Activated CD4-positive, alpha-beta memory T cell treated with anti-CD3 and anti-CD28 coated beads for 36 hours (primary cell): ENCODE measurements at regions of chr3 and their contacts with region 1.

Region 1: GRCh38 chr3:4978204-4978965 is 852 bp upstream of the BHLHE40 start:
- DNase-seq: peak; percentile 98
- H3K4me3 Mint-ChIP-seq: peak overlapping the region; percentile 87
- H3K27ac Mint-ChIP-seq: peak overlapping the region; percentile 99
- H3K4me1 Mint-ChIP-seq: peaks cover 48% of the 10 kb centered on the region
- H3K27me3 Mint-ChIP-seq: no peaks in the 10 kb centered on the region

Region 2: DNA sequence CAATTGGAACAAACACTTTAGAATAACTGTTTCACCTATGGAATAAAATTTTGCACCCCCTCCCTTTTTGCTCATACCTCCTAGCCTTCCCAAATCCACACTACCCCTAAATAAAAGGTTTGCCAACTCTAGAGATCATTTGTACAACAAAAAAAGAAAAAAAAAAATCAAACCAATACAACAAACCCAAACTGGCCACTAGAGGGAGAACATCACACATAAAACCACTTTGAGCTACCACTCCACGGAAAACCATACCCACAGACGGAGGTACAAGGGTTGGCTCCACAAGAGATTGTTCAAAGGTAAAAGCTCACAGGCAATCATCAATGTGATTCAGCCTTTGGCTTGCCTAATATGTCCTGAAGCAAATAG is 627.6 kb before region 1 on chr3:
- CTCF ChIA-PET with region 1: interaction called, 3 read pairs
- POLR2A ChIA-PET with region 1: no interaction called
- intact Hi-C with region 1: loop called (anchors 1 kb)
- DNase-seq: peak; percentile 53
- H3K4me3 Mint-ChIP-seq: peak overlapping the region; percentile 45
- H3K27ac Mint-ChIP-seq: peak overlapping the region; percentile 92
- H3K4me1 Mint-ChIP-seq: peaks cover 21% of the 10 kb centered on the region
- H3K27me3 Mint-ChIP-seq: no peaks in the 10 kb centered on the region

Region 3: GRCh38 chr3:4776980-4777581 is 201.3 kb before region 1 on chr3:
- CTCF ChIA-PET with region 1: interaction called, 10 read pairs
- POLR2A ChIA-PET with region 1: interaction called, 3 read pairs
- intact Hi-C with region 1: loop called (anchors 1 kb)
- DNase-seq: peak; percentile 45
- H3K4me3 Mint-ChIP-seq: peak overlapping the region; percentile 47
- H3K27ac Mint-ChIP-seq: peak overlapping the region; percentile 91
- H3K4me1 Mint-ChIP-seq: peaks cover 37% of the 10 kb centered on the region
- H3K27me3 Mint-ChIP-seq: no peaks in the 10 kb centered on the region

Region 4: GRCh38 chr3:4845882-4846281 is 132.5 kb before region 1 on chr3:
- CTCF ChIA-PET with region 1: interaction called, 33 read pairs
- POLR2A ChIA-PET with region 1: interaction called, 75 read pairs
- intact Hi-C with region 1: loop called (anchors 1 kb)
- DNase-seq: no peak
- H3K4me3 Mint-ChIP-seq: peak overlapping the region; percentile 14
- H3K27ac Mint-ChIP-seq: peak overlapping the region; percentile 83
- H3K4me1 Mint-ChIP-seq: peaks cover 96% of the 10 kb centered on the region
- H3K27me3 Mint-ChIP-seq: no peaks in the 10 kb centered on the region

Region 5: GRCh38 chr3:4906107-4906621 is 72.2 kb before region 1 on chr3:
- CTCF ChIA-PET with region 1: interaction called, 24 read pairs
- POLR2A ChIA-PET with region 1: interaction called, 47 read pairs
- intact Hi-C with region 1: loop called (anchors 1 kb)
- DNase-seq: peak; percentile 72
- H3K4me3 Mint-ChIP-seq: no peak overlapping the region
- H3K27ac Mint-ChIP-seq: peak overlapping the region; percentile 72
- H3K4me1 Mint-ChIP-seq: peaks cover 70% of the 10 kb centered on the region
- H3K27me3 Mint-ChIP-seq: no peaks in the 10 kb centered on the region

Region 6: GRCh38 chr3:5016218-5017161 is 38.1 kb after region 1 on chr3:
- CTCF ChIA-PET with region 1: interaction called, 181 read pairs
- POLR2A ChIA-PET with region 1: interaction called, 263 read pairs
- intact Hi-C with region 1: no loop called
- DNase-seq: peak; percentile 69
- H3K4me3 Mint-ChIP-seq: no peak overlapping the region
- H3K27ac Mint-ChIP-seq: peak overlapping the region; percentile 66
- H3K4me1 Mint-ChIP-seq: peaks cover 77% of the 10 kb centered on the region
- H3K27me3 Mint-ChIP-seq: no peaks in the 10 kb centered on the region

Region 7: DNA sequence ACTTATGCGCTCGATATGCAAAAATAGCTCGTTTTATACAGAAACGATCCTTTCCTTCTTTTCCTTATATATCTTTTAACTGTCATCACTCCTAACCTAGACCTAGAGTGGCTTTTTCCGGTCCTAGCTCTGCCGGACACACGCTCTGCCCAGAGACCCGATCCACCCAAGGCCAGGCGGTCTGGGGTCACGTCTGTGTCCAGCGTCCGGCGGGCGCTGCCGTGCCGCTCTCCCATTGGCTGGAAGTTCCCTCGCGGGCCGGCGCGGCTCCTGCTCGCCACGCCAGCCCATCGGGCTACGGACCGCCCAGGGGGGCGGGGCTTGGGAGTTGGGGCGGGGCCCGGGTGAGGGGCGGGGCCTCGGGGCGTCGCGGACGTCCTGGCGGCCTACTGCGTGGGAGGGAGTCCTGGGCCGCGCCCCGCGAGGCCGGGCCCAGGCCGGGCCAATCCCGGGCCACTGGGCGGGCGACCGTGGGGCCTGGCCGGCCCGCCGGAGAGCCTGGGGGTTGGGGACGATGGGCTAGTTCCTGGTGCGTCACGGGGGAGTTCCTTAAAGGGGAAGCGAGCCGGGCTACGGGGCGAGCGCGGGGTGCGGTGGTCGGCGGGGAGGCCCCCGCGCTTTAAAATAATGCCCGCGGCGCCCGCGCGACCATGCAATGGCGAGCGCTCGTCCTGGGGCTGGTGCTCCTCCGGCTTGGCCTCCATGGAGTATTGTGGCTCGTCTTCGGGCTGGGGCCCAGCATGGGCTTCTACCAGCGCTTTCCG is 209.0 kb after region 1 on chr3 and contains the start of gene EDEM1:
- CTCF ChIA-PET with region 1: no interaction called
- POLR2A ChIA-PET with region 1: interaction called, 10 read pairs
- intact Hi-C with region 1: loop called (anchors 2 kb)
- DNase-seq: peak; percentile 98
- H3K4me3 Mint-ChIP-seq: peak within 1 kb of the TSS; percentile 96
- H3K27ac Mint-ChIP-seq: peak within 1 kb of the TSS; percentile 98
- H3K4me1 Mint-ChIP-seq: peaks cover 27% of the 10 kb centered on the region
- H3K27me3 Mint-ChIP-seq: no peaks in the 10 kb centered on the region
- total RNA-seq, gene EDEM1: 192 to 203 TPM

Region 8: DNA sequence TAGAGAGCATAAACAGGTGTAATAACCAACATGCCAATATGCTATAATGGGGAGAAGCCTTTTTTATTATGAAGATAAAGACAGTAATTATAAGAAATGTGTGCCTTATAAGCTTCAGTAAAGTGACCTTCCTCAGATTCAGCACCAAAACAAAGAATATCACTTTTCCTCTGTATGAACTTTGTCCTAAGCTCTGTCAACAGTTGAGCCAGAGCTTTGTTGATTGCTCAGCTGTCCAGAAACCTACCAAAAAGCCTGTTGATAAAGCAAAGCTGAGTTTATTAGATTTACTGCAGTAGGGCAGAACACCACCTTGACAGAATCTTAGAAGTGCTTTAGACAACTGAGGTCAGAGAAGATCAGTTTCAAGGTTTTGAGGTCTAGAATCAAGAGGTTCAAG is 844.5 kb after region 1 on chr3:
- CTCF ChIA-PET with region 1: no interaction called
- POLR2A ChIA-PET with region 1: no interaction called
- intact Hi-C with region 1: no loop called
- DNase-seq: no peak
- H3K4me3 Mint-ChIP-seq: no peak overlapping the region
- H3K27ac Mint-ChIP-seq: no peak overlapping the region
- H3K4me1 Mint-ChIP-seq: no peaks in the 10 kb centered on the region
- H3K27me3 Mint-ChIP-seq: no peaks in the 10 kb centered on the region